Posterior vena cava (tissue), 2 donors: ENCODE measurements at regions of chrX and their contacts with region 1.

Region 1: DNA sequence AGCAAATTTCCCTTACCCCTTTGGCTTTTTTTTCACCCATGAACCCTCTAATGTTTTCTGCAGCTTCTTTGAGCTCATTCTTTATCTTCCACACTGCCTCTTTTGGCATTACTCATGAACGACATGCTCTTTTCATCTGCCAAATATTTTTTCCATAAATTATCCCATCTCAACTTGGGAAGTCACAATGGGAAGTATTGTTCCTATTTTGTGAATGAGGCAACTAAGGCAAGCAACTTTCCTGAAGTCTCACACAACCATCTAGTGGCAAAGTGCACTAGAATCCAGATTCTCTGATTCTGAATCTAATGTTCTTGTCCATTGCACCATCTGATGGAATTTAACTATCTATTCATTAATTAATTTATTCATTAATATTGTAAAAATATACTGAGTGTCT is 625 bp downstream of the RTL9 start:
- DNase-seq: no peak

Region 2: GRCh38 chrX:110317820-110318658 is 41.2 kb before region 1 on chrX and contains the start of gene AMMECR1:
- intact Hi-C with region 1: loop called in 1 of 2 experiments (anchors 1 kb)
- DNase-seq: peak; percentile 93
- total RNA-seq, gene AMMECR1: 5.6 to 6.2 TPM

Region 3: DNA sequence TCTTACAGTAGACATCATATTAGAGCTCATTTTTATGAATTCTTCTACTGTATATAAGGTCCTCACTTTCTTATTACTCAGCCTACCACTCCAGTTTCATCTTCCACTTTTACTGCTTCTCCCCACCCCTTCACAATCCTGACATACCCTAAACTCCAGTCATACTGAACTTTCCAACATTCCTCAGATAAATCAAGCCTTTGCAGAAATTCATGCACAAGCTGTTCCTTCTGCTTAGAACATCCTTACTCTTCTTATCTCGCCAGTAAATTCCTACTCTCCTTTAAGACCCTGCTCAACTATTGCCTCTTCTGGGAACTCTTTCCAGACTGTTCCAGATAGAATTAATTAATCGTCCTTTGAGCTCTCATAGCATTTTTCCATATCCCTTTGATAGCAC is 24.1 kb after region 1 on chrX:
- intact Hi-C with region 1: loop called in 1 of 2 experiments (anchors 1 kb)
- DNase-seq: no peak